ENCODE measurements at regions of chr5 and their contacts with region 1.

Region 1: DNA sequence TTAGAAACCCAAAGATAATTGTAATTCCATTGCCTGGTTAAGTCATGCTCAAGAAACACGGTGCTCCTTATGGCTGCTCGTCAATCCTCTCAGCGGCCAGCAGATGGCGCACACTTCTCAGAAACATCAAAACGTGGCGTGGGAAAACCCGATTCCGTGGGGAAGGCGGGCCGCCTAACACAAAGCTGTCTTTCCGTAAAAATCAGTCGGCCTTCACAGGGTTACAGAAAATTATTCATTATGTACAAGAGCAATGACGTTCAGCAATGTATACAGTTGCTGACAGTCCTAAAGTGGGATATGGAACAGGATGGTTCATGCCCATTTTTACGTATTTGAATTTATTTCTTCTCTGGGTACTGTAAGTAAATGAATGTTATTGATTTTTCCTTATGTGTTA is 83.5 kb downstream of the PDE4D start:
- DNase-seq: peak; percentile 59
- H3K4me3 ChIP-seq: peak overlapping the region; percentile 31 to 40; a peak in 3 of 4 replicates
- H3K27ac ChIP-seq: no peak overlapping the region
- H3K4me1 ChIP-seq: peaks cover 0 to 5% of the 10 kb centered on the region in 2 experiments; a peak in 1 of 4 replicates
- H3K27me3 ChIP-seq: no peaks in the 10 kb centered on the region
- CTCF ChIP-seq: peak; percentile 96
- EP300 ChIP-seq: no peak
- RAD21 ChIP-seq: peak; percentile 87

Region 2: DNA sequence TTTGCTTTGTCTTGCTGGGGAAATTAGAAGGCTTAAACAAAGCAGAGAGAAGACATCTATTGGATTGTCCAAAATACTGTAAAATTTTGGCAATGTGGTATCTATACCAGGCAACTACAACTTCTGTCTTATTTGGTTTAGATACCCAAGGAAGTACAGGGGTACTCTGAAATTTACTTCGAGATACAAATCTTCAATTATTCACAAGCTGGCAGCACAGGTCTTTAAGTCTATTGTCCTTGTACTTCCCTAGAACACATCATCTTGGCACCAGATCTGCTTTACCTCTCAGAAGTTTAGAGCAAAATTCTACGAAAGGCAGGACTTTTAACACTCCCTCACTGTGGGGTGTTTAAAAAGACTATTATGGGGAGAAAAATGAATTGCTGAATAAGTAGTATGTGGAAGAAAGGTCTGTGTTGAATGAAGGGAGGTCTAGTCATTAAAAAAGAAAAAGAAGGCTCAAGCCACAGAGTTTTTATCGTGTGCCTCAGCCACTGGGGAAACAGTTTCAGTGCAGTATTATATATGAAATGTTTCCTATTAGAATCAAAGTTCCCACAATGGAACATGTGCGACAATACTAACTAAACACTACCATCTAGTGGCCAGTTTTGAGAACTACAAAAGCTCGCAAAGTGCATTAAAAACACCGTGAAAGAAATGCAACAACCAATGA is 10.2 kb before region 1 on chr5:
- CTCF ChIA-PET with region 1: interaction called, 24 read pairs
- POLR2A ChIA-PET with region 1: no interaction called
- DNase-seq: peak; percentile 37
- H3K4me3 ChIP-seq: no peak overlapping the region; a peak in 1 of 4 replicates
- H3K27ac ChIP-seq: peak overlapping the region; percentile 46 to 74; a peak in 3 of 4 replicates
- H3K4me1 ChIP-seq: peaks cover 10 to 15% of the 10 kb centered on the region in 2 experiments
- H3K27me3 ChIP-seq: no peaks in the 10 kb centered on the region
- CTCF ChIP-seq: peak; percentile 81
- EP300 ChIP-seq: no peak
- RAD21 ChIP-seq: peak; percentile 97

Region 3: DNA sequence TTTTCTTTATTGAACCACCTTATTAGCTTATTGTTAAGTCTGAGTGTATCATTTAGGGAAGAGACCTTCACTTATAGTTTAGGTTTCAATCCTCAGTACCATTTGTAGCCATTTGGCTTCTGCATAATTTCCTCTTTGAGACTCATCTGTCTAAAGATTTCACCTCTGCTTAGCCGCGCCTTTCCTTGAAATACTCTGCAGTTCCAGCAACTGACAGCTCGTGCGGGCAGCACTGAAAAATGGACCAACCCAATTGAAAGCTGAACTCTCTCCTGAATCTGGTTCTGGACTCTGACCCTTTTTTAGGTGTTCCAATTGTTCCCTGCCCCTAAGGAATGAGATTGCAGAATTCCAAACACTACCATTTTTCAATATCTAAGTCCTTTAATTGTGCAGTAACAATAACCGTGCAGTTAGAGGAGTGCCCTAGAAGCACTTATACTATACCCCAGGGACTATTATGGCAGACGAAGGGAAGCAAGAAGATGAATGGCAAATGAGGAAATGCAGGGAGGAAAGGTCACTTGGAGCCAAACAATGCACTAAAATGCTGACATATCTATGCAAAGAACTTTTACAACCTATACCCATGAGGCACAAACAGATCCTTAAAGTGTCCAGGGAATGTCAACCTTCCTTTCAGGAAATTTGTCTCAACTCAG is 133.5 kb after region 1 on chr5:
- CTCF ChIA-PET with region 1: no interaction called
- POLR2A ChIA-PET with region 1: no interaction called
- DNase-seq: no peak
- H3K4me3 ChIP-seq: no peak overlapping the region
- H3K27ac ChIP-seq: no peak overlapping the region
- H3K4me1 ChIP-seq: no peaks in the 10 kb centered on the region
- H3K27me3 ChIP-seq: no peaks in the 10 kb centered on the region
- CTCF ChIP-seq: no peak
- EP300 ChIP-seq: no peak
- RAD21 ChIP-seq: no peak

Region 4: GRCh38 chr5:60287174-60287771 is 477.2 kb after region 1 on chr5:
- CTCF ChIA-PET with region 1: interaction called, 23 read pairs
- POLR2A ChIA-PET with region 1: no interaction called
- DNase-seq: peak; percentile 46
- H3K4me3 ChIP-seq: peak overlapping the region in 1 of 2 experiments; percentile 11; a peak in 1 of 4 replicates
- H3K27ac ChIP-seq: no peak overlapping the region
- H3K4me1 ChIP-seq: no peaks in the 10 kb centered on the region
- H3K27me3 ChIP-seq: no peaks in the 10 kb centered on the region
- CTCF ChIP-seq: peak; percentile 73
- EP300 ChIP-seq: no peak
- RAD21 ChIP-seq: peak; percentile 73

Region 5: GRCh38 chr5:60376860-60377259 is 566.8 kb after region 1 on chr5:
- CTCF ChIA-PET with region 1: interaction called, 46 read pairs
- POLR2A ChIA-PET with region 1: no interaction called
- DNase-seq: no peak
- H3K4me3 ChIP-seq: no peak overlapping the region
- H3K27ac ChIP-seq: peak overlapping the region in 1 of 2 experiments; percentile 59; a peak in 2 of 4 replicates
- H3K4me1 ChIP-seq: peaks cover 3 to 16% of the 10 kb centered on the region in 2 experiments; a peak in 2 of 4 replicates
- H3K27me3 ChIP-seq: no peaks in the 10 kb centered on the region
- CTCF ChIP-seq: no peak
- EP300 ChIP-seq: no peak
- RAD21 ChIP-seq: no peak

Region 6: GRCh38 chr5:60586307-60586901 is 776.4 kb after region 1 on chr5:
- CTCF ChIA-PET with region 1: interaction called, 21 read pairs
- POLR2A ChIA-PET with region 1: no interaction called
- DNase-seq: peak; percentile 6
- H3K4me3 ChIP-seq: no peak overlapping the region
- H3K27ac ChIP-seq: no peak overlapping the region
- H3K4me1 ChIP-seq: no peaks in the 10 kb centered on the region; a peak in 1 of 4 replicates
- H3K27me3 ChIP-seq: no peaks in the 10 kb centered on the region
- CTCF ChIP-seq: peak; percentile 65
- EP300 ChIP-seq: no peak
- RAD21 ChIP-seq: peak; percentile 73

Region 7: GRCh38 chr5:60668686-60669304 is 858.8 kb after region 1 on chr5:
- CTCF ChIA-PET with region 1: interaction called, 25 read pairs
- POLR2A ChIA-PET with region 1: no interaction called
- DNase-seq: peak; percentile 22
- H3K4me3 ChIP-seq: no peak overlapping the region
- H3K27ac ChIP-seq: no peak overlapping the region
- H3K4me1 ChIP-seq: no peaks in the 10 kb centered on the region
- H3K27me3 ChIP-seq: no peaks in the 10 kb centered on the region
- CTCF ChIP-seq: peak; percentile 86
- EP300 ChIP-seq: no peak
- RAD21 ChIP-seq: peak; percentile 57

Measured in SK-N-SH (cell line).